Mucosa of descending colon (tissue), 3 donors: ENCODE measurements at regions of chr2 and their contacts with region 1.

Region 1: DNA sequence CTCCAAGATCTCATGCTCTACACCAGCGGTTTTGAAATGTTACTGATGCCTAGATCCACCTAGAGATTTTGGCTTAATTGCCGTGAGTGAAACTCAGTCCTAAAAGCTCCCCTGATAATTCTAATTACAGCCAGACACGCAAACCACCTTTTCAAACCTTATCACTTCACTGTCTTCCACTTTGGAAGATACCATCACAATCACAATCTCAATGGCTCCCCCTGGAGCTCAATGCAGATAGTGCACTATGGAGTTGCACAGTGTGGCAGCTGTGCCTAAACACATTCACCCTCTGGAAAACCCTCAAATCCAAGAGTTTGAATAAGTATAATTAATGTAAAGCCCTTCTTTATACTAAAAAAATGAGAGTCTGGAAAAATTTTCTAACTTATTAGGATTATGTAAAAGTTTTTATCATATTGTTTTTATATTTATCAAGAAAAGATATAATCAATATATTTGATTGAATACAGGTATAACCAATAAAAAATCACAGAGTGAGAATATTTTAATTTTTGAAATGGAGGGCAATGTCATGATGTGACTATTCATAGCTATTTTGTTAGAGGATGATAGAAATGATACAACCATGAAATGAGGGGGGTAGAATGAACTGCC is 102.9 kb upstream of the SLC8A1 start:
- DNase-seq: peak in 2 of 3 donors; percentile 34 to 87
- ATAC-seq: peak; percentile 76
- H3K4me3 ChIP-seq: no peak overlapping the region
- H3K4me1 ChIP-seq: no peaks in the 10 kb centered on the region
- CTCF ChIP-seq: peak; percentile 39

Region 2: GRCh38 chr2:40431600-40431955 is 123.2 kb before region 1 on chr2:
- intact Hi-C with region 1: no loop called
- DNase-seq: no peak
- ATAC-seq: peak; percentile 51
- H3K4me3 ChIP-seq: no peak overlapping the region
- H3K4me1 ChIP-seq: no peaks in the 10 kb centered on the region
- CTCF ChIP-seq: no peak

Region 3: GRCh38 chr2:40451918-40452605 is 102.7 kb before region 1 on chr2 and contains the start of gene SLC8A1:
- intact Hi-C with region 1: loop called in 1 of 2 experiments (anchors 10 kb)
- DNase-seq: peak in 1 of 3 donors; percentile 31
- ATAC-seq: peak; percentile 45
- H3K4me3 ChIP-seq: no peak within 1 kb of the TSS
- H3K4me1 ChIP-seq: no peaks in the 10 kb centered on the region
- CTCF ChIP-seq: no peak
- total RNA-seq, gene SLC8A1: 6.0 to 164 (median 17.0) TPM

Region 4: DNA sequence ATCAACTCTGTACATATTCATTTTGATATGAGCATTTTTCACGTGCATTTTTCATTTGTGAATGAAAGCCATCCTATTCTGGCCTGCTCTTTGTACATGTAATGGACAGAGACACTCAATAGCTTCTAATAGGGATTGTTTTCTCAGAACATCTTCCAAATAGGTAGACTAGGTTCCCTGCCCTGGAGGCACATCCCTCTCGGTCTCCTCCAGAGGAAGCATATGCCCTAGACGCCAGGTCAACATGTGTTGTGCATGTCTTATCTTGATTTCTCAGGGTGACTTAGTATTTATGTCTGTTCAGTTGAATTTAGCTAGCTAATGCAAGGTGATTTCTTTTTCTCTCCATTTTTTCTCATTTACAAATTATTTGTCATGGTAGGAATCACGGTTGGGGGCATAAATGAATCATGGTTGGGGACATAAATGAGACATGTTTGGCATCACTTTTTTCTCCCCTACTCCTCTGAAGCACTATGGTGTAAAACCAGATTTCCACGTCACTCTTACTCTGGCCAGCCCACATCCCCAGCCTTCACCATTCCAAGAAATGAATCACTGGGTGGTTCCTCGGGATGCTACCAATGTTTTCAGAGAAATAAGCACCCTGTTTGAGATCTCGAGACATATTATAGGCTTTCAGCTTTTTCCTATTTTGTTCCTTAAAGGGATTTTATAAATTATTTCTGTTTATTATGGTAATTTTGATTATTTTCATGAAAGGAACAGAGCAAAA is 51.9 kb after region 1 on chr2:
- intact Hi-C with region 1: no loop called
- DNase-seq: no peak
- ATAC-seq: no peak
- H3K4me3 ChIP-seq: no peak overlapping the region
- H3K4me1 ChIP-seq: no peaks in the 10 kb centered on the region
- CTCF ChIP-seq: no peak